ENCODE measurements at regions of chr5 and their contacts with region 1.

Region 1: DNA sequence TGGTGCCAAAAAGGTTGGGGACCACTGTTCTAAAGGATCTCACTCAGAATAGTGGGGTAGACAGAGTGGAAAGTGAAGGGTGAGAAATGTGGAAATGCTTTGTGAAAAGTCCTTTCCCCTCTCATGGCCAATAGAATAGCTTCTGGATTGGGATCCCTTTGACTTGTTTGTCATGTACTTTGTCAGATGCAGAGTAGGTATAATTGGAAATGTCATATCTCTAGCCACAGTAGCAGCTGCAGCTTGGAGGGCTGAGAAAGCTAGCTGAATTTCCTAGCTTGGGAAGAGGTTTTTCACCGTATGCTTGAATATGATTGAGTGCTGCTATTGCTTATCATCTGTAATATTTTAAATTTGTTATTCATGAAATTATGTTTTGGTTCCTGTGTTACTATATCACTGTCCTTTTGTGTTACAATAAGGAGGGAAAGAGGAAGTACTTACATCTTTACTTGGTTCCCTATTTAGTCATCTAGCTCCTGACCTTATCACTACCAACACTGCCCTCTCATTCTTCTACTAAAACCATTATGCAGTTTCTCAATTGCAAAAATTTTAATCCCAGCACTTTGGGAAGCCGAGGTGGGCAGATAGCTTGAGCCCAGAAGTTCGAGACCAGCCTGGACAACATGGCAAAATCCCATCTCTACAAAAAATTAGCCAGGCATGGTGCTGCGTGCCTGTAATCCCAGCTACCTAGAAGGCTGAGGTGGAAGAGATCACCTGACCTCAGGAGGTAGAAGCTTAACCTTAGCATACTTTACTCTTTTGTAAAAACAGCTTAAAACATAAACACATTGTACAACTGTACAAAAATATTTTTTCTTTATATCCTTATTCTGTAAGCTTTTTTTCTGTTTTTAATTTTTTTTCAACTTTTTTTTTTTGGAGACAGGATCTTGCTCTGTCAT is 12.4 kb downstream of the SLC30A5 start:
- DNase-seq: no peak
- ATAC-seq: no peak
- H3K4me3 Mint-ChIP-seq: no peak overlapping the region
- H3K27ac Mint-ChIP-seq: peak overlapping the region; percentile 14
- H3K4me1 Mint-ChIP-seq: no peaks in the 10 kb centered on the region
- H3K27me3 Mint-ChIP-seq: no peaks in the 10 kb centered on the region

Region 2: GRCh38 chr5:68991279-68992084 is 114.8 kb before region 1 on chr5:
- CTCF ChIA-PET with region 1: no interaction called
- POLR2A ChIA-PET with region 1: no interaction called
- intact Hi-C with region 1: no loop called
- DNase-seq: no peak
- ATAC-seq: no peak
- H3K4me3 Mint-ChIP-seq: no peak overlapping the region
- H3K27ac Mint-ChIP-seq: no peak overlapping the region
- H3K4me1 Mint-ChIP-seq: peaks cover 7% of the 10 kb centered on the region
- H3K27me3 Mint-ChIP-seq: peaks cover 3% of the 10 kb centered on the region

Region 3: GRCh38 chr5:69129413-69129812 is 23.2 kb after region 1 on chr5:
- CTCF ChIA-PET with region 1: no interaction called
- POLR2A ChIA-PET with region 1: no interaction called
- intact Hi-C with region 1: loop called in 1 of 2 experiments (anchors 2 kb)
- DNase-seq: no peak
- ATAC-seq: no peak
- H3K4me3 Mint-ChIP-seq: no peak overlapping the region
- H3K27ac Mint-ChIP-seq: no peak overlapping the region
- H3K4me1 Mint-ChIP-seq: no peaks in the 10 kb centered on the region
- H3K27me3 Mint-ChIP-seq: no peaks in the 10 kb centered on the region

Measured in activated CD4-positive, alpha-beta T cell treated with anti-CD3 and anti-CD28 coated beads for 36 hours (primary cell).